Activated B cell treated with CpG ODN at 0.5 μM for 24 hours (primary cell): ENCODE measurements at regions of chr14 and their contacts with region 1.

Region 1: DNA sequence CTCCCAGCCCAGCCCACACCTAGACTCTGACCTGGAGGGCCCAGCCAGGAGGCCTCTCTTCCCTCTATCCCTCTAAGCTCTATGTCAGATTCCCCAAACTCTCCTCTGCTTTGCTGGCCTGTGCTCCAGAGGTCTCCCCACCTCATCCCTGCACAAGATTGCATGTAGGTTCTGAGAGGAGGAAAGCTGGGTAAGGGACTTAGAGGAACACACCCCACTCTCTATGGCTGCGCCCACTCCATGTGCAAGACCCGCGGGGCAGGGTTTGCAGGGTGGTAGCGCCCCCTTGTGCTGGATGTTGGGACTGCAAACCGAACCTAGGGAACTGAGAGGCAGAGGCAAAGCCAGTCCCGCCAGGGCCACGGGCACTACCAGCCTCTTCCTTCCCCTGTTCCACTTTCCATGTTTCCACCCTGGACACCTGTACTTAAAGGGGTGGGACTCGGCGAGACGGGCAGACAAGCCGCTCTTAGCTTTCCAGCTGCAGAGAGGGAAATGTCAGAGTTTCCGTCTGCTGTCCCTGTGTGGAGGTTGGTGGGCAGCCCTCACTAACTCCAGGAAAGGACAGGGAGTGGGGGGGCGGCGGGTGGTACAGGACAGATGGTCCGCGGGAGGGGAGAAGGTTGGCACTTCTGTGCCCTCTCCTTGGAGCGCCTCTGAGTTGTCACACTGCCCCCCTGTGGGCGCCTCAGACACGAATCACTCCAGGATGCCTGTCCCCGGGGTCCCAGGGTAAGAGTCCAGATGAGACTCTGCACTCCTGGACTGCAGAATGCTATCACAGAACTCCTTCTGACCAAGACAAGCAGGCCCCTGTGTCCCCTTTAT is 16.8 kb downstream of the MMP14 start:
- DNase-seq: peak; percentile 97
- ATAC-seq: peak; percentile 94
- H3K4me3 Mint-ChIP-seq: peak overlapping the region; percentile 79
- H3K27ac Mint-ChIP-seq: peak overlapping the region; percentile 78
- H3K4me1 Mint-ChIP-seq: peaks cover 6% of the 10 kb centered on the region
- H3K27me3 Mint-ChIP-seq: peaks cover 6% of the 10 kb centered on the region
- CTCF ChIP-seq: peak; percentile 81

Region 2: DNA sequence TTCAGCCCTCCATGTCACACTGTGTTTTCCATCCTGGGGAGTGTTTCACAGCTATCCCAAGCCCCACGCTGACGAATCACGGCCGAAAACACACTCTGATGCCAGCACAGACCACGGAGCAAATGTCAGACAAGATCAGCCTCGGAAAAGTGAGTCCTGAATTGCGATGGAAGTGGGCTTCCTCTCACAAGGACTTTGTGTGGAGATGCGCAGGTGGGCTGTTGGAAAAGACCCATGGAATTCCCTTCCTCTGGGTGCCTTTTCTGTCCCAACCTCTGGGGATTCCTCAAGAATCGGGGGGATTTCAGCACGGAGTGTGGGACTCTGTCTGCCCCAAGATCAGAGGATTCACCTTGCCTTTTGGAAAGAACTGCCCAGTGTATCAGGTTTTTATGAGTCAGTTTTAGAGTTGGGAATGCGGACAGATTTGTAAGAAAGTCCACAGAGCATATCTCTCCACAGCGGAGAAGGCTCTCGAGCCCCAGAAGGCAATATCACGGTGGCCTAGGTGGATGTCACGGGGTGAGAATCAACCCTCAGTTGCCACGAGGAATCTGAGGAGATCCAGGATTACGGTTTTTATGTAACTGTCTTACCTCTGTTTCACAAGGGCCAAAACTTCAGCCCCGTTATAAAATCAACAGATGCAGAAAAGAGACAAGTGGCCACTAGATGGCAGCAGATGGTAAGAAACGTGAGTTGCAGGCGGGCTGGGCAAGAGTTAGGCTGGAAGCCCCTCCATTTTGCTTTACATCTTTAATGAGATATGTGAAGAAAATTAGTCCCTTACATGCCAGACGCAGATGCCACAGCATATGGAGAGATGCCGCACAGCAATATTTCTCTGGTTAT is 466.0 kb before region 1 on chr14:
- CTCF ChIA-PET with region 1: interaction called, 7 read pairs
- POLR2A ChIA-PET with region 1: no interaction called
- intact Hi-C with region 1: loop called (anchors 1 kb)
- DNase-seq: peak; percentile 46
- ATAC-seq: peak; percentile 15
- H3K4me3 Mint-ChIP-seq: peak overlapping the region; percentile 24
- H3K27ac Mint-ChIP-seq: peak overlapping the region; percentile 98
- H3K4me1 Mint-ChIP-seq: peaks cover 78% of the 10 kb centered on the region
- H3K27me3 Mint-ChIP-seq: no peaks in the 10 kb centered on the region
- CTCF ChIP-seq: peak; percentile 18

Region 3: GRCh38 chr14:22653012-22653621 is 200.0 kb before region 1 on chr14:
- CTCF ChIA-PET with region 1: interaction called, 36 read pairs
- POLR2A ChIA-PET with region 1: no interaction called
- intact Hi-C with region 1: loop called (anchors 1 kb)
- DNase-seq: no peak
- ATAC-seq: peak; percentile 78
- H3K4me3 Mint-ChIP-seq: no peak overlapping the region
- H3K27ac Mint-ChIP-seq: no peak overlapping the region
- H3K4me1 Mint-ChIP-seq: no peaks in the 10 kb centered on the region
- H3K27me3 Mint-ChIP-seq: no peaks in the 10 kb centered on the region
- CTCF ChIP-seq: no peak

Region 4: GRCh38 chr14:22766456-22767322 is 86.5 kb before region 1 on chr14 and contains the start of gene OXA1L:
- CTCF ChIA-PET with region 1: interaction called, 15 read pairs
- POLR2A ChIA-PET with region 1: interaction called, 9 read pairs
- intact Hi-C with region 1: no loop called
- DNase-seq: peak; percentile 79
- ATAC-seq: peak; percentile 89
- H3K4me3 Mint-ChIP-seq: peak within 1 kb of the TSS; percentile 93
- H3K27ac Mint-ChIP-seq: peak within 1 kb of the TSS; percentile 97
- H3K4me1 Mint-ChIP-seq: peaks cover 35% of the 10 kb centered on the region
- H3K27me3 Mint-ChIP-seq: no peaks in the 10 kb centered on the region
- CTCF ChIP-seq: no peak
- total RNA-seq, gene OXA1L: 174 and 190 TPM in 2 replicates

Region 5: GRCh38 chr14:22822571-22823098 is 30.5 kb before region 1 on chr14:
- CTCF ChIA-PET with region 1: interaction called, 64 read pairs
- POLR2A ChIA-PET with region 1: interaction called, 25 read pairs
- intact Hi-C with region 1: loop called (anchors 1 kb)
- DNase-seq: peak; percentile 69
- ATAC-seq: peak; percentile 76
- H3K4me3 Mint-ChIP-seq: peak overlapping the region; percentile 86
- H3K27ac Mint-ChIP-seq: peak overlapping the region; percentile 92
- H3K4me1 Mint-ChIP-seq: peaks cover 60% of the 10 kb centered on the region
- H3K27me3 Mint-ChIP-seq: no peaks in the 10 kb centered on the region
- CTCF ChIP-seq: no peak

Region 6: DNA sequence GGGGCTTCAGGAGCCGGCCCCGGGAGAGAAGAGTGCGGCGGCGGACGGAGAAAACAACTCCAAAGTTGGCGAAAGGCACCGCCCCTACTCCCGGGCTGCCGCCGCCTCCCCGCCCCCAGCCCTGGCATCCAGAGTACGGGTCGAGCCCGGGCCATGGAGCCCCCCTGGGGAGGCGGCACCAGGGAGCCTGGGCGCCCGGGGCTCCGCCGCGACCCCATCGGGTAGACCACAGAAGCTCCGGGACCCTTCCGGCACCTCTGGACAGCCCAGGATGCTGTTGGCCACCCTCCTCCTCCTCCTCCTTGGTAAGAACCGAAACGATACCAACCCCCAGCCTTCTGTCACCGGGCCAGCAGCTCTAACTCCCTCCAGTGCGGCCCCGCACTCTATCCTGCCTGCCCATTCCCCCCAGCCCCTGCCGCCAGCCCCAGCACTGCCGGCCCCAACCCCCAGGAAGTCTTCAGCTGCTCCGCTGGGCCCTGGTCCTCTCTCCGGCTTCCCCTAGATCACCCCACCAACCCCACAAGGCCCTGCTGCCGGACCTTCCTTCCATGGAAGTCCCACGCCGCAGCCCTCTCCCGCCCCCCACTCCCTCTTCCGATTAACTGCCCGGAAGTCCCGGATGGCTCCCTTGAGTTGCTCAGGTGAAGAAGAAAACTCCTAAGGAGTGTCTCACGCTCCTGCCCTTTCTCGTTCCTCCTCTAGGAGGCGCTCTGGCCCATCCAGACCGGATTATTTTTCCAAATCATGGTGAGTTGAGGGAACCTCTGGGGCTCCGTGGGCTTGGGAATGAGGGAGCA is 19.1 kb after region 1 on chr14:
- CTCF ChIA-PET with region 1: interaction called, 15 read pairs
- POLR2A ChIA-PET with region 1: interaction called, 8 read pairs
- intact Hi-C with region 1: loop called (anchors 1 kb)
- DNase-seq: peak; percentile 69
- ATAC-seq: peak; percentile 22
- H3K4me3 Mint-ChIP-seq: peak overlapping the region; percentile 89
- H3K27ac Mint-ChIP-seq: peak overlapping the region; percentile 92
- H3K4me1 Mint-ChIP-seq: peaks cover 33% of the 10 kb centered on the region
- H3K27me3 Mint-ChIP-seq: no peaks in the 10 kb centered on the region
- CTCF ChIP-seq: no peak